Posterior vena cava (tissue), 2 donors: ENCODE measurements at regions of chr3 and their contacts with region 1.

Region 1: DNA sequence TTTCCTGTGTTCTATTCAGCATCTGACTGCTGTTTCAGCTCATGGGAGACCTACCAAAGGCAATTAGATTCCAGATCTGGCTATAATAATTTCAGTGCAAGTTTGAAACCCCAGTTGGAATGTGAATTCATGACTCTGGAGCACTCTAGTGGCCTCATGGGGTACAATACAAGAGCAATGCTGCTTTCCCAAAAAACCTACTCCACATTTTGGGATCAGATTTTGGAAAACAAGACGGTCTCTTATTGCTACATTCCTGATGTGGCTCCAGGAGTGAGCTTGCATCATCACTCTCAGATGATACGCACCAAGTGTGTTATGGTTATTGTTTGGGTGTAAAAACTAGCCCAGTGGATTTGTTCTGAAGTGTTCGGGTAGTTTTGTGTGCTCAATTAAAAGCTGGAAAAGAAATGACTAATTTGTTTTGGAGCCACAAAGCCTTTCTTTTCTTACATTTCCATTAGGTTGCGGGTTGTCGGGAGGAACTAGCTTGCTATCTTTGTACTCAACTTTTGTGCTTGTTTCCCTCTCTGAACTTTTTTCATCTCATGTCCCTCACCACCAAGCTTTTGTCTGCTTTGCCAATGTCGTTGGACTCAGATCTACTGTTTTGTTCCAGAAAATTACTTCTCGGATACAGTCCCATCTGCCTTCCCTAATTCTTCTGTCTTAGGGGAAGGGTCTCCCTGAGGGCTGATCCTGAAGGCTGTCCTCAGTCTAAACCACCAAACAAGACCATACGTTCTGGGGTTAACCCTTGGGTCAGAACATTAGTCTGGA is 272.1 kb downstream of the BBX start:
- DNase-seq: no peak

Region 2: DNA sequence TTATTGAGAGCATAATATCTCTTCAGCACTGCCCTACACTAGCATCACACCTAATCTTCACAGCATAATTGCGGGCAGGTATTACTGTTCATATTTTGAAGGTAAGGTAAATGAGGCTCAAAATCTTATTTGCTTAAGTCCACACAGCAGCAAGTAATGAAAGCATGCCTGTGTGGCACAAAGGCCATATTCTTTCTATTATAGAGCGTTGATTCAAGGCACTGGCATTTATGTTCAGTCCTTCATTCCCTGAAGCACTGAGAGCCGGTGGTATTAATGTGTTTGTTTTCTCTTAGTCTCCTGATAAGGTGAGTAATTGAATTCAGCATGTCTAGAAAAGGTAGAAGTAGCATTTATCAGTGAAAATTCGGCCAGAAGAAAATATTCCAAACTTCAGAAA is 40.9 kb before region 1 on chr3:
- intact Hi-C with region 1: loop called in 1 of 2 experiments (anchors 1 kb)
- DNase-seq: no peak